ENCODE measurements at regions of chr7 and their contacts with region 1.

Region 1: GRCh38 chr7:76282344-76283253 is 19.9 kb upstream of the HSPB1 start:
- DNase-seq: no peak
- ATAC-seq: peak; percentile 38
- H3K4me3 Mint-ChIP-seq: peak overlapping the region; percentile 68
- H3K27ac Mint-ChIP-seq: no peak overlapping the region
- H3K4me1 Mint-ChIP-seq: peaks cover 16% of the 10 kb centered on the region
- H3K27me3 Mint-ChIP-seq: peaks cover 38% of the 10 kb centered on the region
- CTCF ChIP-seq: no peak

Region 2: GRCh38 chr7:76297387-76297756 is 14.8 kb after region 1 on chr7:
- CTCF ChIA-PET with region 1: no interaction called
- POLR2A ChIA-PET with region 1: no interaction called
- intact Hi-C with region 1: no loop called
- DNase-seq: no peak
- ATAC-seq: no peak
- H3K4me3 Mint-ChIP-seq: no peak overlapping the region
- H3K27ac Mint-ChIP-seq: no peak overlapping the region
- H3K4me1 Mint-ChIP-seq: peaks cover 8% of the 10 kb centered on the region
- H3K27me3 Mint-ChIP-seq: peaks cover 9% of the 10 kb centered on the region
- CTCF ChIP-seq: no peak

Region 3: DNA sequence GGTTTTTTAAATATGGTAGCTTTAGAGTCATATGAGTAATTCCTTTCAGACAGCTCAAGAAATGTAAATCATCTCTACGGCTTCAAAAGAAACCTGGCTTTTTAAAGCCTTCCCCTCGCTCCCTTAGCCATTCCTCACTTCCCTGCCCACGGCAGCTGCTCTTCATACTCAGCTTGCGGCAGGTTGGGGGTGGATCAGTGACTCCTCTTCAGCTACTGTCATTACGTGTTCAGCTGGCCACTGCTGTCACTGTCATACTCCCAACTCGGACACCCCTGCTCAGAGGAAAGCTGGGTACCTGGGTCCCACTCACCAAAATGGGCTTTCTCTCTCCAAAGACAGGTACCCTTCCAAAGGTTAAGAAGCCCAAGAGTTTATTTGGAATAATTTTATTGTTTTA is 69.6 kb after region 1 on chr7:
- CTCF ChIA-PET with region 1: no interaction called
- POLR2A ChIA-PET with region 1: interaction called, 14 read pairs
- intact Hi-C with region 1: no loop called
- DNase-seq: no peak
- ATAC-seq: no peak
- H3K4me3 Mint-ChIP-seq: no peak overlapping the region
- H3K27ac Mint-ChIP-seq: no peak overlapping the region
- H3K4me1 Mint-ChIP-seq: peaks cover 48% of the 10 kb centered on the region
- H3K27me3 Mint-ChIP-seq: no peaks in the 10 kb centered on the region
- CTCF ChIP-seq: no peak